Calu3 (cell line): ENCODE measurements at regions of chr3 and their contacts with region 1.

Region 1: DNA sequence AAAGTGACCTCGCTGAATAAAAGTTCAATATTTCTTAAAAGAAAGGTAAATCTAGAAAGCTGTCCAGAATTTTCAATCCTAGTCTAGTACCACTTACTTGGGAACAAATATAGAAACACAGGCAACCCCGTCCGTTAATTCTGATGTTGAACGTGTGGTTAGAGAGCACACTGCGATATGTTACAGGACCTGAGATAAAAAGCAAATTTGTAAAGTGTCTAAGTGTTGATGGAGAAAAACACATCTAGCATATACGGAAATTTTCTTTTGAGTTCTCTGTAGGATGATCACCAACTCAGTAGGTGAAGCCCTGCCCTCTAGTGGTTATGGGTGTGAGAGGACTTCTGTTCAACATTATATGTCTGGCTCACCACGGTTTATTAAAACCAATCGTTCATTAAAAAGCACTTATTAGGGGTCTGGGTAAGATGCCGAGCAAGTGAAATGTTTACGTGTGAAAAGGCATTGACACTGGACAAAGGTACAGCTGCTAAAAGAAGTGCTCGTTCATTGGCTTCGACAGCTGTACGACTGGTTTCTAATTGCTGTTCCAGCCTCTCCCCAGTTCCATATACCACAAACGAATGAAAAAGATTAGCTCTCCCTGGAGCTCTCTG is 1.0 kb upstream of the ATP2C1 start:
- DNase-seq: peak; percentile 87
- H3K4me3 Mint-ChIP-seq: peak overlapping the region; percentile 93
- H3K27ac Mint-ChIP-seq: peak overlapping the region; percentile 98
- H3K4me1 Mint-ChIP-seq: peaks cover 28% of the 10 kb centered on the region
- H3K27me3 Mint-ChIP-seq: no peaks in the 10 kb centered on the region
- CTCF ChIP-seq: peak; percentile 92

Region 2: DNA sequence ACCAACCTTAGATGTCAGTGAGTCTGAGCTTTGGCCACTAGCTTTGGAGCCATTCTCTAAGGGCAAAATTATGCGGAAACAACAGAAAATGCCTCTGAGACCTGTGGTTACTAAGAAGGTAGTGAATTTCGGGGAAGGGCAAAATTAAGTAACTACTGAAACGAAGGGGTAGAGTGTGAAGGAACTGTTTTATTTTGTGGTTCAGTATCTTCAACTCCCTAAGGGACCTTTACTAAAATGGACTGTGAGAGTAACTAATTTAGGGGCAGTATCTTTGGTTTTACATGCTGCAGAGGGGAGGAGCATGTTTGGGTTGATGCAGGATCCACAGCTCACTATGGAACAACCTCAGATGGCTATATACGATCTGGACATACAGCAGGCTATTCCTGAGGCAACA is 819.3 kb before region 1 on chr3:
- CTCF ChIA-PET with region 1: no interaction called
- intact Hi-C with region 1: no loop called
- DNase-seq: no peak
- H3K4me3 Mint-ChIP-seq: no peak overlapping the region
- H3K27ac Mint-ChIP-seq: no peak overlapping the region
- H3K4me1 Mint-ChIP-seq: no peaks in the 10 kb centered on the region
- H3K27me3 Mint-ChIP-seq: peaks cover 13% of the 10 kb centered on the region
- CTCF ChIP-seq: no peak

Region 3: DNA sequence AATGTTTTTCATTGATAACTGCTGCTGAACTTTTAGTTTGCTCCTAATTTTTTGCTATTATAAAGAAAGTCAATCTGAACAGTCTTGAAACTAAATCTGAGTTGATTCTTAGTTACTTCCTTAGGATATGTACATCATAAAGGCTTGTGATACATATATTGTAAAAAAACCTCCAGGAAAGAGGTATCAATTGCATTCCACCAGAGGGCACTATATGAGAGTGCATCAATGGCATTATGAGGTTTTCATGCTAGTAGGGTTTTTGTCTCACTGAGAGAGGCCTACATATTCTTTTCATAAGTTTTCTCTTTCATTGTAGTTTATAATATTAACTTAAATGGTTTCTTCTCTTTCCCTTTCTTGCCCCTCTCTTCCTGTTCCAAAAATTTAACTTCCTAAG is 193.1 kb before region 1 on chr3:
- CTCF ChIA-PET with region 1: interaction called, 4 read pairs
- intact Hi-C with region 1: loop called (anchors 1 kb)
- DNase-seq: peak; percentile 44
- H3K4me3 Mint-ChIP-seq: no peak overlapping the region
- H3K27ac Mint-ChIP-seq: no peak overlapping the region
- H3K4me1 Mint-ChIP-seq: no peaks in the 10 kb centered on the region
- H3K27me3 Mint-ChIP-seq: no peaks in the 10 kb centered on the region
- CTCF ChIP-seq: peak; percentile 77

Region 4: GRCh38 chr3:130773366-130773765 is 119.5 kb before region 1 on chr3:
- CTCF ChIA-PET with region 1: interaction called, 13 read pairs
- intact Hi-C with region 1: no loop called
- DNase-seq: no peak
- H3K4me3 Mint-ChIP-seq: no peak overlapping the region
- H3K27ac Mint-ChIP-seq: no peak overlapping the region
- H3K4me1 Mint-ChIP-seq: peaks cover 32% of the 10 kb centered on the region
- H3K27me3 Mint-ChIP-seq: no peaks in the 10 kb centered on the region
- CTCF ChIP-seq: no peak

Region 5: GRCh38 chr3:130850044-130850797 is 42.6 kb before region 1 on chr3:
- CTCF ChIA-PET with region 1: interaction called, 23 read pairs
- intact Hi-C with region 1: loop called (anchors 1 kb)
- DNase-seq: peak; percentile 72
- H3K4me3 Mint-ChIP-seq: peak overlapping the region; percentile 74
- H3K27ac Mint-ChIP-seq: peak overlapping the region; percentile 96
- H3K4me1 Mint-ChIP-seq: peaks cover 54% of the 10 kb centered on the region
- H3K27me3 Mint-ChIP-seq: no peaks in the 10 kb centered on the region
- CTCF ChIP-seq: no peak

Region 6: GRCh38 chr3:130925628-130926027 is 32.8 kb after region 1 on chr3:
- CTCF ChIA-PET with region 1: no interaction called
- intact Hi-C with region 1: no loop called
- DNase-seq: peak; percentile 35
- H3K4me3 Mint-ChIP-seq: no peak overlapping the region
- H3K27ac Mint-ChIP-seq: no peak overlapping the region
- H3K4me1 Mint-ChIP-seq: peaks cover 53% of the 10 kb centered on the region
- H3K27me3 Mint-ChIP-seq: no peaks in the 10 kb centered on the region
- CTCF ChIP-seq: no peak

Region 7: GRCh38 chr3:131485119-131485518 is 592.3 kb after region 1 on chr3:
- CTCF ChIA-PET with region 1: no interaction called
- intact Hi-C with region 1: no loop called
- DNase-seq: no peak
- H3K4me3 Mint-ChIP-seq: no peak overlapping the region
- H3K27ac Mint-ChIP-seq: no peak overlapping the region
- H3K4me1 Mint-ChIP-seq: no peaks in the 10 kb centered on the region
- H3K27me3 Mint-ChIP-seq: no peaks in the 10 kb centered on the region
- CTCF ChIP-seq: no peak

Region 8: DNA sequence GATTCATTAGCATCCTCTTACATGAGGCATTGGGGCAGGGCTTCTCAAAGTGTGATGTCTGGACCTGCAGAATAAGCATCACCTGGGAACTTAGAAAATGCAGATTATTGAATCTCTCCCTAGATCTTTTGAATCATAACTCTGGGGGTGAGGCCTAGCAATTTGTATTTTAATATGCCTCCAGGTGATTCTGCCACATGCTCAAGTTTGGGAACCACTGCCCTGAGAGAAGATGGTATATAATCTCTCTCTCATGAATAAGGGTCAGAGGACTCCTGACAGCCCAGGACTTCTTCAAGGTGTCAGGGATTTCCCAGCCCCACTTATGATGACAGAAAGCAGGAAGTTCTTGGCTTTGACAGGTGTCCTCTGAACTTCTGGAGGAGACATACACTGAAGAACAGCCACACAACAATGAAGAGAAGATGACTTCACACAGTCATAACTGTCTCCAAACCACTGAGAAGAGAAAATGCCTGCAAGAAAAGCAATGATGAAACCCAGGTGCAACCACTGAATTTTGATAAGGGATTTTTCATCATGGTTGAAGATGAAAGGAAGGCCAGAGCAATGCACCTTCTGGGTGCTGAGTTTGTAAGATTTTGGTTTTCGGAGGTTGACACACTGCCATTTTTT is 821.8 kb after region 1 on chr3:
- CTCF ChIA-PET with region 1: no interaction called
- intact Hi-C with region 1: no loop called
- DNase-seq: no peak
- H3K4me3 Mint-ChIP-seq: no peak overlapping the region
- H3K27ac Mint-ChIP-seq: no peak overlapping the region
- H3K4me1 Mint-ChIP-seq: peaks cover 34% of the 10 kb centered on the region
- H3K27me3 Mint-ChIP-seq: no peaks in the 10 kb centered on the region
- CTCF ChIP-seq: no peak